SK-N-SH (cell line): ENCODE measurements at regions of chr4 and their contacts with region 1.

Region 1: DNA sequence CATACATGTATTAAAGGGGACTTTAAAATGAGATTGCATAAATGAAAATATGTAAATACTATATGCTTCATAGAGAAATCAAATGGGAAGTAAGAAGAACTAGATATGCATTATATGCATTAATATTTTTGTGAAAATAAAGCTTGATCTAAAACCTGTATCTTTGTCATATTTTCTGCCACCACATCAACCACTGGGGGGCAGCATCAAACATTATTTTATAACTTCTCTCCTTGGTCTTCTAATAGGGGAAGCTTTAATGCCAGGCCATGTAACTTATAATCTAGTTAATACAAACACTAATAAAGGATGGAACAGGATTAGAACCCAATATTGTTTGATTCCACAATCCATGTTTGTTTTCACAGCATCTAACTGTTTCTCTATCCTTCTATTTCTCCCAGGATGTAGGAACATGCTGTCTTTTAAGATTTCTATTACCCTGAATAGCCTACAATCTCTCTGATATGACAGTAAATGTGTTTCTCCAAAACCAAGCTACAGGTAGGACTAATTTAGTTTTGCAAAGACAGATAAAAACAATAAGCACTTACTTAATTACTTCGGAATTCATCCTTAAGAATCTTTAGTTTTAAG is 10.0 kb downstream of the QRFPR start:
- DNase-seq: peak; percentile 26
- H3K4me3 ChIP-seq: no peak overlapping the region; a peak in 1 of 4 replicates
- H3K27ac ChIP-seq: no peak overlapping the region
- H3K4me1 ChIP-seq: peaks cover 0 to 12% of the 10 kb centered on the region in 2 experiments; a peak in 1 of 4 replicates
- H3K27me3 ChIP-seq: peaks cover 39% of the 10 kb centered on the region; the same call in 1 of the 2 replicates
- CTCF ChIP-seq: peak; percentile 80
- EP300 ChIP-seq: no peak
- RAD21 ChIP-seq: peak; percentile 57

Region 2: GRCh38 chr4:121360495-121360894 is 10.3 kb before region 1 on chr4:
- CTCF ChIA-PET with region 1: interaction called, 15 read pairs
- POLR2A ChIA-PET with region 1: no interaction called
- DNase-seq: no peak
- H3K4me3 ChIP-seq: no peak overlapping the region
- H3K27ac ChIP-seq: no peak overlapping the region
- H3K4me1 ChIP-seq: no peaks in the 10 kb centered on the region; a peak in 1 of 4 replicates
- H3K27me3 ChIP-seq: no peaks in the 10 kb centered on the region; the same call in 1 of the 2 replicates
- CTCF ChIP-seq: no peak
- EP300 ChIP-seq: no peak
- RAD21 ChIP-seq: no peak

Region 3: DNA sequence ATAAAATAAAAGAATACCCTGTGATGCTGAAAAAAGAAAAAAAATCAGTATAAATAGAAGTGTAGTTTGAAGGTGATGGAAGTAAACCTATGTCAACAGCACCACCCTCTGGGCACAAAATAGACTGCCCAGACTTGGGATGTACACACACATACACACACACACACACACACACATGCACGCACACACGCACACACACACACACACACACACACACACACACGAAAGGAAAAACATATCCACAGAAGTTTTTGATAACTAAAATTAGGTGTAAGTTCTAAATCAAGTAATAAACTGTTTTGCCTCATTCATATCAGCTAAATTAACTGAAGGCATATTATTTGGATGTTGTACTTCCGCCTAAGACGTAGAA is 285.4 kb after region 1 on chr4:
- CTCF ChIA-PET with region 1: interaction called, 10 read pairs
- POLR2A ChIA-PET with region 1: no interaction called
- DNase-seq: peak; percentile 33
- H3K4me3 ChIP-seq: no peak overlapping the region; a peak in 1 of 4 replicates
- H3K27ac ChIP-seq: no peak overlapping the region; a peak in 1 of 4 replicates
- H3K4me1 ChIP-seq: no peaks in the 10 kb centered on the region; a peak in 1 of 4 replicates
- H3K27me3 ChIP-seq: no peaks in the 10 kb centered on the region
- CTCF ChIP-seq: peak; percentile 70
- EP300 ChIP-seq: no peak
- RAD21 ChIP-seq: peak; percentile 72

Region 4: GRCh38 chr4:121736735-121737351 is 366.0 kb after region 1 on chr4:
- CTCF ChIA-PET with region 1: interaction called, 18 read pairs
- POLR2A ChIA-PET with region 1: no interaction called
- DNase-seq: peak; percentile 45
- H3K4me3 ChIP-seq: no peak overlapping the region
- H3K27ac ChIP-seq: no peak overlapping the region
- H3K4me1 ChIP-seq: peaks cover 0 to 2% of the 10 kb centered on the region in 2 experiments; a peak in 2 of 4 replicates
- H3K27me3 ChIP-seq: no peaks in the 10 kb centered on the region
- CTCF ChIP-seq: peak; percentile 77
- EP300 ChIP-seq: no peak
- RAD21 ChIP-seq: peak; percentile 76